Activated T-helper 1 cell treated with anti-CD3 and anti-CD28 coated beads, Interleukin-12 subunit alpha, Interleukin-12 subunit beta, Interleukin-2, Interleukin-4 antibody, amounts not matched to agents 30 ng/mL and 10 ng/mL and 1 ng/mL, durations not matched to agents 14 hours and 24 hours and 36 hours (primary cell): ENCODE measurements at regions of chr11 and their contacts with region 1.

Region 1: DNA sequence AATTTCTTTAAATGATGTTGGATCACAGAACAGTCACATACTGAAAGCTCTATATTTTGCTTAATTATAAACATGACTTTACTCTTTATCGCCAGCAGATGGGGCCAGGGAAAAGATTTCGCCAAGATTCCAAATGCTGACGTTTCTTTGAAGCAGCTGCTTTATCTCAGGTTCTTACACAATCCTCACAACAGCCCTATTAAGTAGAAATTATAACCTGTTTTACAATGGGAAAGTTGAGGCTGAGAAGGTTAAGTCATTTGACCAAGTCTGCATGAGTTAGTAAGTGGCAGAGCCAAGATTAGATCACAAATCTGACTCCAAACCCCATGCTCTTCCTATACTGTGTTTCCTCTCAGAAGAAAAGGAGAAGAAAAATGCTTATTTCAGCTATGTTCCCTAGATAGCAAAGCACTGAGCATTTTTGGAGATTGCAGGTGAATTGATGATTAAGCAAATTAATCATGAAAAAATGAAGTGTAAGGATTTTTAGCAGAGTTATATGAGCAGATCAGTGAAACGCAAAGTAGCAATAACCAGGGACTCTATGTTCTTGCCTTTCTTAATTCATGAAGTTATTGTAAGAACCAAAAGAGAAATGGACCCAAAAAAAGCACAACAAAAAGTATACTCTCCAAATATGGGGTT is 79.0 kb downstream of the AASDHPPT start:
- DNase-seq: no peak
- H3K4me3 Mint-ChIP-seq: no peak overlapping the region
- H3K27ac Mint-ChIP-seq: no peak overlapping the region
- H3K4me1 Mint-ChIP-seq: no peaks in the 10 kb centered on the region
- H3K27me3 Mint-ChIP-seq: peaks cover 2% of the 10 kb centered on the region

Region 2: GRCh38 chr11:107043242-107044006 is 887.0 kb after region 1 on chr11:
- intact Hi-C with region 1: loop called (anchors 5 kb)
- DNase-seq: no peak
- H3K4me3 Mint-ChIP-seq: no peak overlapping the region
- H3K27ac Mint-ChIP-seq: no peak overlapping the region
- H3K4me1 Mint-ChIP-seq: no peaks in the 10 kb centered on the region
- H3K27me3 Mint-ChIP-seq: no peaks in the 10 kb centered on the region